ENCODE measurements at regions of chr11 and their contacts with region 1.

Region 1: GRCh38 chr11:2466869-2467698 is 22.3 kb downstream of the KCNQ1 start:
- DNase-seq: no peak
- ATAC-seq: peak; percentile 75
- H3K4me3 ChIP-seq: no peak overlapping the region
- H3K27ac ChIP-seq: no peak overlapping the region
- H3K4me1 ChIP-seq: peaks cover 10% of the 10 kb centered on the region; the same call in 1 of the 2 replicates
- H3K27me3 ChIP-seq: no peaks in the 10 kb centered on the region; a peak in 1 of 4 replicates
- CTCF ChIP-seq: no peak
- EP300 ChIP-seq: no peak
- POLR2A ChIP-seq: no peak
- RAD21 ChIP-seq: no peak

Region 2: DNA sequence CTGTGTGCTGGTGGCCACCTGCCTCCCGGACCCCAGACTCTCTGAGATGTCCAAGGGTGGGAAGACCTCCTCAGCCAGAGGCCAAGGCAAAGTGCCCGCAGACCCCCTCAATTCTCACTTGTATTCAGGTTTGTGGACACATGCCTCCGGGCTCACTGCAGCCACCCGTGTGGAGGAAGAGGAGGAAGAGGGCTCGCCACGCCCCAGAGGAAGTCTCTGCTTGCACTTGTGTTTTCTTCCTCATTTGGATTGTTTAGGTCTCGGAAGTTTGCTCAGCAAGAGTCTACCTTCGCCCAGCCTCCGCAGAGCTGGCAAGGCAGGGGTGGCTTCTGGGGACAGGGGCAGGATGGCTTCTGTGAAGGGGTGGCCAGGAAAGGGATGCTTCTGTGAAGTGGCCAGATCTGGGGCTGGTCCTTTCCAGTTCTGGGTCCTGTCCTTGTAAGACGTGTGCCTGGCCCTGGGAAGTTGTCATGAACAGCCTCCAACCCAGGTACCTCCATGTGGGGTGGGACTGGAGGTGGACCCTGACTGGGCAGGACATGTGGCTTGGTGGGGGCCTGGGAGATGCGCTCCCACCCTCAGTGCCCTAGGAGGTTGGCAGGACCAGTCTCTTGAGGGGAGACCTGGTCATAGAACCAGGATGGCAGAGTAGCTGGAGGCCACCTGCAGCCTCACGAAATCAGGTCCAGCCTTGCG is 20.0 kb before region 1 on chr11:
- CTCF ChIA-PET with region 1: no interaction called
- POLR2A ChIA-PET with region 1: no interaction called
- RAD21 ChIA-PET with region 1: no interaction called
- SMC1A ChIA-PET with region 1: no interaction called
- in situ Hi-C with region 1: no loop called
- intact Hi-C with region 1: loop called (anchors 2 kb)
- DNase-seq: no peak
- ATAC-seq: no peak
- H3K4me3 ChIP-seq: no peak overlapping the region
- H3K27ac ChIP-seq: no peak overlapping the region
- H3K4me1 ChIP-seq: no peaks in the 10 kb centered on the region
- H3K27me3 ChIP-seq: peaks cover 2 to 7% of the 10 kb centered on the region in 2 experiments; a peak in 3 of 4 replicates
- CTCF ChIP-seq: no peak
- EP300 ChIP-seq: no peak
- POLR2A ChIP-seq: no peak
- RAD21 ChIP-seq: no peak

Region 3: DNA sequence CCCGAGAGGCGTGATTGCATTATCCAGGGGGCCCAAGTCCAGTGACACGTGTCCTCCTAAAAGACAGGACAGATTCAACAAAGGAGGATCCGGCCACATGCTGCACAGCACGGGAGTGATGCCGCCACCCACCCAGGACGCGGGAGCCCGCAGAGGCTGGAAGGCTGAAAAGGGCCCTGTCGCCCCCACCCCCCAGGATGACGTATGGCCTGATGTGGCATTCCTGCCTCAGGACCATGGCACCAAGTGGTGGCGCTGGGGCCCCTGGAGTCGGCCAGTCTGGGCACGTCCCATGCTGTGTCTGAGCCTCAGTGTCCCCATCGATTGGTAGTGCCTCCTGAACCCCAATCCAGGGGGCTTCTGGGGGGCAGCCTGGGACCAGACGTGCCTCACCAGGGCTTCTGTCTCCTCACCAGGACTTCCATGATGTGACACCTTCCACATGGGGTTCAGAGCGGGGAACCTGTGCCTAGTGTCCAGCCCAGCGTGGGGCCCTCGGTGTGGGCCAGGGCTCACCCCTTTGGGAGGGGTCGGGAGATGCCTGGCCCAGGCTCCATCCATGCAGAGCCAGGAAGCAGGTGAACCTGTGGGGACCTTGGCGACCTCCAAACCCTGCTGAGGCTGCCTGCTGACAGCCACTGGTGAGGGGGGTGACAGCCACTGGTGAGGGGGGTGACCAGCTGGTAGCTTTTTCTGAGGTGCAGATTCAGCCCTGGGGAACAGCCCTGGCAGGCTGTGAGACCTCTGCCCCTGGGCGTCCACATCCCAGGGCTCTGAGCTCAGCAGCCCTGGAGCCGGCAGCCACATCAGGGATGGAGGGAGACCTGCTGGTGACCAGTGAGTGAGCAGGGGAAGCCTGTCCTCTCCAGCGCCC is 53.0 kb after region 1 on chr11:
- CTCF ChIA-PET with region 1: no interaction called
- POLR2A ChIA-PET with region 1: no interaction called
- RAD21 ChIA-PET with region 1: no interaction called
- SMC1A ChIA-PET with region 1: no interaction called
- in situ Hi-C with region 1: loop called (anchors 5 kb)
- intact Hi-C with region 1: no loop called
- DNase-seq: no peak
- ATAC-seq: no peak
- H3K4me3 ChIP-seq: no peak overlapping the region
- H3K27ac ChIP-seq: no peak overlapping the region
- H3K4me1 ChIP-seq: no peaks in the 10 kb centered on the region
- H3K27me3 ChIP-seq: no peaks in the 10 kb centered on the region
- CTCF ChIP-seq: no peak
- EP300 ChIP-seq: no peak
- POLR2A ChIP-seq: no peak
- RAD21 ChIP-seq: no peak

Region 4: GRCh38 chr11:2644844-2645778 is 178.0 kb after region 1 on chr11:
- CTCF ChIA-PET with region 1: no interaction called
- POLR2A ChIA-PET with region 1: no interaction called
- RAD21 ChIA-PET with region 1: no interaction called
- SMC1A ChIA-PET with region 1: no interaction called
- in situ Hi-C with region 1: no loop called
- intact Hi-C with region 1: no loop called
- DNase-seq: no peak
- ATAC-seq: no peak
- H3K4me3 ChIP-seq: no peak overlapping the region
- H3K27ac ChIP-seq: no peak overlapping the region
- H3K4me1 ChIP-seq: no peaks in the 10 kb centered on the region
- H3K27me3 ChIP-seq: no peaks in the 10 kb centered on the region; a peak in 1 of 4 replicates
- CTCF ChIP-seq: no peak
- EP300 ChIP-seq: no peak
- POLR2A ChIP-seq: no peak
- RAD21 ChIP-seq: no peak

Measured in GM12878 (cell line).